Gastrocnemius medialis (tissue), 4 donors: ENCODE measurements at regions of chr9 and their contacts with region 1.

Region 1: GRCh38 chr9:110850401-110851135 is 182.0 kb downstream of the MUSK start:
- DNase-seq: no peak
- ATAC-seq: no peak
- H3K4me3 ChIP-seq: no peak overlapping the region
- H3K27ac ChIP-seq: no peak overlapping the region
- H3K4me1 ChIP-seq: no peaks in the 10 kb centered on the region
- H3K27me3 ChIP-seq: no peaks in the 10 kb centered on the region
- CTCF ChIP-seq: no peak
- POLR2A ChIP-seq: no peak

Region 2: DNA sequence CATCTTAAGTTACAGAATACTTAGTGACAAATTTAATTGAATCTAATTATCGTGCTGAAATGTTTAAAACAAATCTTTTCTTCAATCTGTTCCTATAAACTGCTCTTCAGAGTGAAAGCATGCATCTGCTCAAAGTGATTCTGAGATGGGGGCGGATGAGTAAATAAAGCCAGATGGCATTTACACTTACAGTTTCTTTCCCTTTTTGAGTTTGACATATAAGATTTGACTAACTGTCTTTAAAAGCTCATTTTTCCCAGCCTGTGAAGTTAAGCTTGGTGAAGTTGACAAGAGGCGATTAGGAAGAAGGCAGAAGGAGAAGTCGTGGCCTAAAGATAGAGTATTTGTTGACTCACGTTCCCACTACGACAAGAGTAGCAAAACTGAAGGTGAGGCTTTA is 50.3 kb after region 1 on chr9:
- in situ Hi-C with region 1: no loop called
- intact Hi-C with region 1: no loop called
- DNase-seq: no peak
- ATAC-seq: no peak
- H3K4me3 ChIP-seq: no peak overlapping the region
- H3K27ac ChIP-seq: no peak overlapping the region
- H3K4me1 ChIP-seq: no peaks in the 10 kb centered on the region
- H3K27me3 ChIP-seq: no peaks in the 10 kb centered on the region
- CTCF ChIP-seq: no peak
- POLR2A ChIP-seq: no peak

Region 3: DNA sequence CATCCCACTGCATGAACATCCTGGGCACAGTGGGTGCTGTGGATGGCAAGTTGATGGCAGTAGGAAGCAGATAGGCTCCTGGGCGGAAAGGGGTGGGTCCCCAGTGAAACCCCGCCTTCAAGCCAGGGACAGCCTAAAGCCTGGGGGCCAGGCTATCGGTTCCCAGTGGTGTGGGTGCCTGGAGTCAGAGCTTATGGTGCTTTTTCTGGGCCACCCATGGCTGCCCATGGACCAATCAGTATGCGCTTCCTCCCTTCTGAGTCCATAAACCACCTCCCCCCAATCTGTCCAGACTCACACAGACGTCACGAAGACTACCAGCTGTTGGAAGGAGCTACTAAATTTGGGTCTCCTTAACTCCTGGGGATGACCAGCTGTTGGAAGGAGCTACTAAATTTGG is 651.1 kb after region 1 on chr9:
- in situ Hi-C with region 1: no loop called
- intact Hi-C with region 1: loop called (anchors 5 kb)
- DNase-seq: no peak
- ATAC-seq: no peak
- H3K4me3 ChIP-seq: no peak overlapping the region
- H3K27ac ChIP-seq: no peak overlapping the region
- H3K4me1 ChIP-seq: no peaks in the 10 kb centered on the region
- H3K27me3 ChIP-seq: no peaks in the 10 kb centered on the region
- CTCF ChIP-seq: no peak
- POLR2A ChIP-seq: no peak